ENCODE measurements at regions of chr1 and their contacts with region 1.

Region 1: DNA sequence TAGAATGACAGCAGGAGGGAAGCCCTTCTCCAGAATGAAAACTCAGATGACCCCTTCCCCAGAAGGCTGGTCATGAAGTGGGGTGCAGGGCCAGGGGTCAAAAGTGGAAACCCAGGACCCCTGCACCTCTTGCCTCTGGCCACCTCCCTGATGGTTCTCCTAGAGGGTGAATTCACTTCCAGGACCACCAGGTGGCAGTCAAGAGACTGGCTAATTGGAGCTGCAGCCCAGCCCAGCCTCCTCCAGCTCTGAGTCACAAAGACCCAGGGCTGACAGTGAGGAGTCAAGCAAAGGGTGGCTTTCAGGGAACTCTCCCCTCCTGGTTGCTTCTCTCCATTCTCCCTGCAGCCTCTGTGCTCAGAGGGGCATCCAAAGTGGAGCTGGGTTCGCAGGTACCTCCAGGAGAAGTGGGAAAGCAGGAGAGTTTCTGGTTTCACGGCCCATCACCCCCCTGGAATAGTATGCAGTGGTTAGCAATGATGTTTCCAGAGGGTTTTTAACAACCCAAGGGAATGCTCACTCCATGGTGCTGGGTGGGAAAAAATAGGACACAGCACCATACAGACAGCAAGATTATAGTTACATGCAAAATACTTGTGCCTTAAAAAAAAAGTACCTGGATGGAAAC is 6.1 kb upstream of the EPHB2 start:
- DNase-seq: peak; percentile 66 to 95 (median 90)
- H3K4me3 ChIP-seq: no peak overlapping the region
- H3K27ac ChIP-seq: peak overlapping the region in 2 of 59 donors; percentile 4 to 57
- H3K27me3 ChIP-seq: no peaks in the 10 kb centered on the region
- CTCF ChIP-seq: peak; percentile 75 to 99 (median 95)

Region 2: GRCh38 chr1:22665752-22666151 is 38.8 kb before region 1 on chr1:
- intact Hi-C with region 1: no loop called
- DNase-seq: no peak
- H3K4me3 ChIP-seq: no peak overlapping the region
- H3K27ac ChIP-seq: no peak overlapping the region
- H3K27me3 ChIP-seq: peaks cover 0 to 4% (median 0%) of the 10 kb centered on the region in 45 donors
- CTCF ChIP-seq: peak in 44 of 56 donors; percentile 12 to 58 (median 29)

Region 3: GRCh38 chr1:22814176-22815042 is 109.9 kb after region 1 on chr1:
- intact Hi-C with region 1: loop called (anchors 2 to 5 kb)
- DNase-seq: peak; percentile 35 to 88 (median 80)
- H3K4me3 ChIP-seq: no peak overlapping the region
- H3K27ac ChIP-seq: peak overlapping the region; percentile 21 to 84 (median 74)
- H3K27me3 ChIP-seq: no peaks in the 10 kb centered on the region
- CTCF ChIP-seq: peak in 3 of 56 donors; percentile 11 to 31 (median 20)

Region 4: GRCh38 chr1:22861764-22862440 is 157.3 kb after region 1 on chr1:
- intact Hi-C with region 1: loop called (anchors 1 to 2 kb)
- DNase-seq: peak in 6 of 10 donors; percentile 49 to 73 (median 63)
- H3K4me3 ChIP-seq: no peak overlapping the region
- H3K27ac ChIP-seq: peak overlapping the region in 33 of 59 donors; percentile 10 to 85 (median 49)
- H3K27me3 ChIP-seq: no peaks in the 10 kb centered on the region
- CTCF ChIP-seq: peak; percentile 71 to 98 (median 87)